ENCODE measurements at regions of chr13 and their contacts with region 1.

Region 1: GRCh38 chr13:90287521-90287920 is 1060.0 kb upstream of the MIR17HG start:
- DNase-seq: no peak
- H3K4me3 ChIP-seq: no peak overlapping the region
- H3K27ac ChIP-seq: no peak overlapping the region
- H3K4me1 ChIP-seq: no peaks in the 10 kb centered on the region
- H3K27me3 ChIP-seq: no peaks in the 10 kb centered on the region
- CTCF ChIP-seq: no peak

Region 2: GRCh38 chr13:90020536-90021070 is 266.9 kb before region 1 on chr13:
- CTCF ChIA-PET with region 1: no interaction called
- POLR2A ChIA-PET with region 1: interaction called, 27 read pairs
- intact Hi-C with region 1: no loop called
- DNase-seq: no peak
- H3K4me3 ChIP-seq: no peak overlapping the region
- H3K27ac ChIP-seq: no peak overlapping the region
- H3K4me1 ChIP-seq: no peaks in the 10 kb centered on the region
- H3K27me3 ChIP-seq: no peaks in the 10 kb centered on the region
- CTCF ChIP-seq: no peak

Measured in A673 (cell line).